A549 (cell line): ENCODE measurements at regions of chr3 and their contacts with region 1.

Region 1: GRCh38 chr3:127544192-127544802 is 46.2 kb downstream of the TPRA1 start:
- DNase-seq: peak; percentile 70 to 86
- ATAC-seq: peak; percentile 81 to 89
- H3K4me3 ChIP-seq: no peak overlapping the region
- H3K27ac ChIP-seq: no peak overlapping the region; a peak in 1 of 6 replicates
- H3K4me1 ChIP-seq: peaks cover 7% of the 10 kb centered on the region; the same call in 1 of the 3 replicates
- CTCF ChIP-seq: peak; percentile 64
- EP300 ChIP-seq: no peak
- POLR2A ChIP-seq: no peak
- RAD21 ChIP-seq: peak; percentile 66 to 71

Region 2: GRCh38 chr3:127529346-127530188 is 14.7 kb before region 1 on chr3:
- CTCF ChIA-PET with region 1: interaction called, 42 read pairs
- POLR2A ChIA-PET with region 1: no interaction called
- DNase-seq: no peak
- ATAC-seq: no peak
- H3K4me3 ChIP-seq: no peak overlapping the region
- H3K27ac ChIP-seq: no peak overlapping the region
- H3K4me1 ChIP-seq: peaks cover 12% of the 10 kb centered on the region; the same call in 2 of the 3 replicates
- CTCF ChIP-seq: no peak
- EP300 ChIP-seq: no peak
- POLR2A ChIP-seq: no peak
- RAD21 ChIP-seq: no peak

Region 3: DNA sequence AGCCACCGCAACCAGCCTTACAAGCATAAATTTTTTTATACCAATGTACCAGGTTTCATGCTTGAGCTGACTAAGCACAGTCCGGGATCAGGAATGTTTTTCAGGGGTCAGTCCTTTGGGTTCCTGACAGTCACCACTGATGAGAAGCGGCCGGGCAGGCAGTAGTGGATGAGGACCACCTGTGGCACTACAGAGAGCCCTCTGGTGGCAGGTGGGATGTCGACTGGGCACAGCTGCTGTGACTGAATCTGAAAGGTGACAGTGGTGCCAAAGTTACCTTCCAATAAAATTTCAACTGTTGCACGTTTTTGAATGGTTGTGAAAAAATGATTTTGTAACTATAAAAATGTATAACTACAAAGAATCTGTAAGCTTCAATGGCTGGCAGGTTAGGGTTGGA is 12.3 kb after region 1 on chr3:
- CTCF ChIA-PET with region 1: interaction called, 21 read pairs
- POLR2A ChIA-PET with region 1: no interaction called
- DNase-seq: no peak
- ATAC-seq: no peak
- H3K4me3 ChIP-seq: no peak overlapping the region
- H3K27ac ChIP-seq: no peak overlapping the region
- H3K4me1 ChIP-seq: no peaks in the 10 kb centered on the region
- CTCF ChIP-seq: 0 out of 3 replicates have a peak, but pooled peaks have one; percentile 11
- EP300 ChIP-seq: no peak
- POLR2A ChIP-seq: no peak
- RAD21 ChIP-seq: no peak

Region 4: GRCh38 chr3:127723011-127723567 is 178.8 kb after region 1 on chr3:
- CTCF ChIA-PET with region 1: no interaction called
- POLR2A ChIA-PET with region 1: no interaction called
- DNase-seq: no peak
- ATAC-seq: no peak
- H3K4me3 ChIP-seq: no peak overlapping the region
- H3K27ac ChIP-seq: no peak overlapping the region
- H3K4me1 ChIP-seq: no peaks in the 10 kb centered on the region
- CTCF ChIP-seq: no peak
- EP300 ChIP-seq: no peak
- POLR2A ChIP-seq: no peak
- RAD21 ChIP-seq: no peak